ENCODE measurements at regions of chr1 and their contacts with region 1.

Region 1: DNA sequence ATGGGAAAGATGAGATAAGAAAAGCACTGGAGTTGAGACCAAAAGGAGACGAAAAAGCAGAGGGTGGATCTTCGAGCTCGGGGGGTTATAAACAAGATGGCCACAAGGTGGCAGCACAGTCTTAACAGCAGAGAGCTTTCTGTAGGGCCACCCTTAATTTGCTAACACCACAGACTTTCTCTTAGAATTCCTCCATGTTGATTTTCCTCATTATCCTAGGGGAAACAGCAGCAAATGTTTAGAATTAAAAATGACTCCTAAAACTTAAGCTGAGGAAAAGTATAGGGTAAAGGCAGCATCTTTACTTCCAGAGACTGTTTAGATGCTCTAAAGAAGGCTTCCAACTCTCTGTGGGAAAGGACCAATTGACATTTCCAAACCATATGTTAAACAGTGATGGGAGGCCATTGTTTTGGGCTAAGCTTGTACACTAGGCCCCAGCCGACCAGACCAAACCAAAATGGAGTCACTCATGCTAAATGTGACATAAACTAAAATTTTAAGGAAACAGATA is 2.5 kb upstream of the APOBEC4 start:
- DNase-seq: peak; percentile 82
- ATAC-seq: peak; percentile 70
- H3K4me3 Mint-ChIP-seq: no peak overlapping the region
- H3K27ac Mint-ChIP-seq: no peak overlapping the region
- H3K4me1 Mint-ChIP-seq: peaks cover 39% of the 10 kb centered on the region
- H3K27me3 Mint-ChIP-seq: peaks cover 4% of the 10 kb centered on the region

Region 2: DNA sequence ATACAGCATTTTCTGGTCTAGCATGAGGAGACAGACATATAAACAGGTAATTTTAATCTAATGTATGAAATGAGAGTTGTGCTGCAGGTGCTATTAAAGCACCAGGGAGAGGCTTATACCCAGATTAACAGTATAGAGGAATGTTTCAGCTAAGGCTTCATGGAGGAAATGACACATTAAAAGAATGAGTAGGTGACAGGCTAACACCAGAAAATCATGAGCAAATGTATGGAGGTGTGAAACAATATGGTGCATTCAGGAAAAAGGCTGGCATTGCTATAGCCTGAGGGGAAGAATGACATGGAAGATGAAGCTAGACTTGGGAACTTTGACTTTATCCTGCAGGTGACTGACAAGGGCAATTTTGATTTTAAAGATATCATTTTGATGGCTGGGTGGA is 27.1 kb before region 1 on chr1:
- CTCF ChIA-PET with region 1: interaction called, 52 read pairs
- POLR2A ChIA-PET with region 1: interaction called, 29 read pairs
- DNase-seq: no peak
- ATAC-seq: no peak
- H3K4me3 Mint-ChIP-seq: no peak overlapping the region
- H3K27ac Mint-ChIP-seq: no peak overlapping the region
- H3K4me1 Mint-ChIP-seq: peaks cover 39% of the 10 kb centered on the region
- H3K27me3 Mint-ChIP-seq: no peaks in the 10 kb centered on the region

Region 3: GRCh38 chr1:183635606-183636333 is 19.8 kb before region 1 on chr1 and contains the start of gene ARPC5:
- CTCF ChIA-PET with region 1: interaction called, 52 read pairs
- POLR2A ChIA-PET with region 1: interaction called, 29 read pairs
- DNase-seq: peak; percentile 96
- ATAC-seq: peak; percentile 94
- H3K4me3 Mint-ChIP-seq: peak within 1 kb of the TSS; percentile 100
- H3K27ac Mint-ChIP-seq: peak within 1 kb of the TSS; percentile 99
- H3K4me1 Mint-ChIP-seq: peaks cover 31% of the 10 kb centered on the region
- H3K27me3 Mint-ChIP-seq: peaks cover 11% of the 10 kb centered on the region
- total RNA-seq, gene ARPC5: 271 to 274 TPM

Region 4: GRCh38 chr1:183670178-183670577 is 14.6 kb after region 1 on chr1:
- CTCF ChIA-PET with region 1: interaction called, 22 read pairs
- POLR2A ChIA-PET with region 1: no interaction called
- DNase-seq: no peak
- ATAC-seq: no peak
- H3K4me3 Mint-ChIP-seq: no peak overlapping the region
- H3K27ac Mint-ChIP-seq: no peak overlapping the region
- H3K4me1 Mint-ChIP-seq: no peaks in the 10 kb centered on the region
- H3K27me3 Mint-ChIP-seq: peaks cover 6% of the 10 kb centered on the region

Region 5: DNA sequence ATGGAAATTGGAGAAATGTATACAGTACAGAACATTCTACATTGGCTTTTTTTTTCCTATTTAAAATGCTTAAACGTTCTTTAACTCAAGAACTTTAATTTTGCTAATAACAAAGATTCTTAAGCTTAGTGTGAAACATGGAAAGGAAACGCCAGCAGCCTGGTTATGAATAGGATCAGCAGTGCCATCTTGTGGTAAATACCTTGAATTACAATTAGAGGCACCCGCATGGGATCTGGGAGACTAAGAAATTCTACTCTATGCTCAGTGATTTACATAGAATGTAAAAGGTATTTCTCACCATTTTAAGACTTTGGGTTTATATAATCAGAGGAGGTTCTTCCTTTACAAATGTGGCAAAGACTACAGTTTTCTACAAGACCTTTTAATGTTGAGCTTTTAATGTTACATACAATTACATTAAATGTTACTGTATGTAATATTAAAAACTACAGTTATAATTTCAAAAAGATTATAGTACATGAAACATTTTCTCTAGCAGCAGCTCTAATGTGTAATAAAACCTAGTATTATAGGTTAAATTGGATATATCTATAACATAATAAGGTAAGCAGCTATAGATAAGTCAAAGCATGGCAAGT is 29.6 kb after region 1 on chr1:
- CTCF ChIA-PET with region 1: interaction called, 131 read pairs
- POLR2A ChIA-PET with region 1: no interaction called
- DNase-seq: peak; percentile 46
- ATAC-seq: peak; percentile 60
- H3K4me3 Mint-ChIP-seq: no peak overlapping the region
- H3K27ac Mint-ChIP-seq: no peak overlapping the region
- H3K4me1 Mint-ChIP-seq: no peaks in the 10 kb centered on the region
- H3K27me3 Mint-ChIP-seq: peaks cover 28% of the 10 kb centered on the region

Region 6: DNA sequence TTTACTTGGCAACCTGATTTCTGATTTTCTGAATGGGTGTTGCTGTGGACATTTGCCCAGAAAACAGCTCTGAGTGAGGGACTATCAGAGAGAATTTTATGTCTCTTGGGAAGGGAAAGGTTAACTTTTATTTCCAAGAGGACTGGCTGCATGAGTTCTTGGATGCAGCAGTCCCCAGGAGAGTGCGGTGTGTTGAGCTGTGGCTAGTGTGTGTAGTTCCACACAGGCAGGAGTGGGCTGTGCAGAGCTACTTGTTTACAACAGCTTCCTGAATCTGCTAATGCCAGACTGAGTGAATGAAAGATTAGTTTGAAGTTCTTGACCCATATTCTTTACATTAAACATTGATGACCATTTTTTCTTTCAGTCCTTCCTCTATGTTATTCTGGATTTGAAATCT is 38.4 kb after region 1 on chr1:
- CTCF ChIA-PET with region 1: interaction called, 17 read pairs
- POLR2A ChIA-PET with region 1: no interaction called
- DNase-seq: no peak
- ATAC-seq: no peak
- H3K4me3 Mint-ChIP-seq: no peak overlapping the region
- H3K27ac Mint-ChIP-seq: no peak overlapping the region
- H3K4me1 Mint-ChIP-seq: no peaks in the 10 kb centered on the region
- H3K27me3 Mint-ChIP-seq: no peaks in the 10 kb centered on the region

Region 7: DNA sequence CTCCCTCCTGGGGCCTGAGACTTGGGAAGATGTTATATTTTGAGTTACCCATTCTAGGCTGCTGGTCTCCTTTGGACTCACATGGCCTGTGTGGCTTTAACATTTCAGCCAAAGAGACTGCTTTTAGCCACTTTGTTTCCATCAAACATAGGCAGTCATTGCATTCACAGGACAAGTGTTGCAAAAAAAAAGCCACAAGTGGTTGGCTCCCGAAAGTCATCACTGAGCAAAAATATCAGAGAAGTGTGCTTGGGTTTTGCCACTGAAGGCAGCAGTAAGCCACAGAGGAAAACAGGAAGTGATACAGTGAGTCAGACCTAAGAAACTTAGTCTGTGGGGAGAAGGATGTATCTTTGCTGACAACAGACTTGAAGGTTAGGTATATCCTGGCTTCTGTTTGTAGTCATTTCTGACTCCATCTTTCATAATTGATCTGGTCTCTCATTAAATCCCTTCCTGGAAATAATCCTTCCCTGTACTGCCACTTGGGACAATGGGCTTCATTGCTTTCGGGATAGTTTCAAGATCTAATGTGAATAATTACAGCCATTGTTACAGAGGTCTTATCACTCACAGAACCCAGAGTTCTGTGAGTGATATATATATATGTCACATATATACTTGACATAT is 301.1 kb after region 1 on chr1:
- CTCF ChIA-PET with region 1: interaction called, 17 read pairs
- POLR2A ChIA-PET with region 1: no interaction called
- DNase-seq: peak; percentile 76
- ATAC-seq: peak; percentile 99
- H3K4me3 Mint-ChIP-seq: peak overlapping the region; percentile 15
- H3K27ac Mint-ChIP-seq: peak overlapping the region; percentile 87
- H3K4me1 Mint-ChIP-seq: peaks cover 7% of the 10 kb centered on the region
- H3K27me3 Mint-ChIP-seq: peaks cover 2% of the 10 kb centered on the region

Measured in activated CD8-positive, alpha-beta T cell treated with anti-CD3 and anti-CD28 coated beads, Interleukin-2, amount 10 ng/mL, durations not matched to agents 7 days and 5 days (primary cell).